Dendritic cell treated with granulocyte-macrophage colony-stimulating factor and Interleukin-4, amounts not matched to agents 40 ng/mL and 50 ng/mL, for 4 days (primary cell): ENCODE measurements at regions of chr1 and their contacts with region 1.

Region 1: DNA sequence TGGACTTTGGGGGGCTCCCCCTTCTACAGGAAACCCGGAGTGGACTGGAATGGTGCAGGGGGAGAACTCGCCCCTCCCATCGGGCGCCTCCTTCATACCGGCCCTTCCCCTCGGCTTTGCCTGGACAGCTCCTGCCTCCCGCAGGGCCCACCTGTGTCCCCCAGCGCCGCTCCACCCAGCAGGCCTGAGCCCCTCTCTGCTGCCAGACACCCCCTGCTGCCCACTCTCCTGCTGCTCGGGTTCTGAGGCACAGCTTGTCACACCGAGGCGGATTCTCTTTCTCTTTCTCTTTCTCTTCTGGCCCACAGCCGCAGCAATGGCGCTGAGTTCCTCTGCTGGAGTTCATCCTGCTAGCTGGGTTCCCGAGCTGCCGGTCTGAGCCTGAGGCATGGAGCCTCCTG is at the start of gene TNFRSF14:
- H3K4me3 Mint-ChIP-seq: peak within 1 kb of the TSS; percentile 84
- H3K27ac Mint-ChIP-seq: peak within 1 kb of the TSS; percentile 96
- H3K4me1 Mint-ChIP-seq: peaks cover 66% of the 10 kb centered on the region
- H3K27me3 Mint-ChIP-seq: peaks cover 9% of the 10 kb centered on the region

Region 2: DNA sequence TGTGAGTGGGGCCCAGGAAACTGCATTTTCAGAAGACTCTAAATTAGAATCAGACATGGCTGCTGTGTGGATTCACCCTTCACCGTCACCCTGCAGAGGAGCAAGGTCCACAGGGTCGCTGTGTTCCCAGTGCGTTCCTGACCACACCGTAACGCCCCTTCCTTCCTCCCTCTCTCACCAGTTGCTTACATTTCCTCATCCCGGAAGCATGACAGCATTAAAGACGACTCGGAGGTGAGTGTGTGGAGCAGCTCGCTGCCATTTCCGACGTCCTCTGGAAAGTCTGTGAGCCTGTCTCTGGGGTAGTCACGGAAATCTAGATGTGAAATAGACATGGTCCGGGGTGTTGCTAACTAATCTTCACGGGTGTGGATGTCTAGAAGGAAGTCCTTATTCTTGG is 407.6 kb before region 1 on chr1:
- intact Hi-C with region 1: no loop called
- H3K4me3 Mint-ChIP-seq: no peak overlapping the region
- H3K27ac Mint-ChIP-seq: no peak overlapping the region
- H3K4me1 Mint-ChIP-seq: peaks cover 18% of the 10 kb centered on the region
- H3K27me3 Mint-ChIP-seq: no peaks in the 10 kb centered on the region

Region 3: GRCh38 chr1:2578758-2579118 is 22.5 kb after region 1 on chr1:
- intact Hi-C with region 1: loop called (anchors 2 kb)
- H3K4me3 Mint-ChIP-seq: no peak overlapping the region
- H3K27ac Mint-ChIP-seq: peak overlapping the region; percentile 90
- H3K4me1 Mint-ChIP-seq: peaks cover 85% of the 10 kb centered on the region
- H3K27me3 Mint-ChIP-seq: peaks cover 5% of the 10 kb centered on the region